ENCODE measurements at regions of chr1 and their contacts with region 1.

Region 1: DNA sequence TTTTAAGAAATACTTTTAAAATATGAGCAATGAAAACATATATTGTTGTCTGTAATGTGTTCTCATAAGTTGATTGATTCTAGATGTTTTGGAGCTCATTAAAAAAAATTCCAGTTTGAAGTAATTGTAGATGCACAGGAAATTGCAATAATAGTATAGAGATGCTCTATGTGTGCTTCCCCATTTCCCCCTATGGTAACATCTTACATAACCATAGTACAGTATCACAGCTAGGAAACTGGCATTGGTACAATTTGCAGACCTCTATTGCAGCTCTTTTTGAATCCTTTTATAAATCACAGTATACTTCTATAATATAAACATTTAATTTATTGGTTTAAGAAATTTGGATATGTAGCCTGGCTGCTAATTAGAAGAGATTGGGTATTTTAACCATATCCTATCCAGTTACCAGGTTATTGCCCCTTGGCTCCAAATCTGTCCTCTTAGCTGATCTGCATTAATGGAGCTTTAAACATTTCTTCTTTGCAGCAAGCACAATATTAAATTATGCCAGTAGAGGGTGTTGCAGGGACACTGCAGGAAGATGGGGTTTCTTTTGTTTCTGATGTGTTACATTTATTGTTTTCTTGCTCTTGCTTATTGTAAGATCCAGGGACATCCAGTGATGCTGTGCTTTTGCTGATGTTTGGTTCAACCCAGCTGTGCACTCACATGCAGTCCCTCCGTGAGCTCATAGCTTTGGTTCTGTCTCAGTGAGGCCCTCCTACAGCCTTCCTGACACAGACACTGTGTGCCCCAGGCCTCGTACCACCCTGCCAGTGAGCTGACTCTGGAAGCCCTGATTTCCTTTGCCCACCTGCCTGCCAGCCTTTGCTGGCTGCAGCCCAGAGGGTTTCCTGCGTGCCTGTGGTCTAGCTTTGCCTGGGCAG is 103.3 kb downstream of the RABGAP1L start:
- DNase-seq: peak in 1 of 2 donors; percentile 78
- H3K4me3 ChIP-seq: no peak overlapping the region
- H3K27ac ChIP-seq: no peak overlapping the region
- H3K4me1 ChIP-seq: peaks cover 0 to 4% (median 0%) of the 10 kb centered on the region in 4 donors
- H3K27me3 ChIP-seq: no peaks in the 10 kb centered on the region
- CTCF ChIP-seq: peak in 5 of 7 experiments; percentile 43 to 52 (median 50)
- EP300 ChIP-seq: no peak
- POLR2A ChIP-seq: no peak

Region 2: GRCh38 chr1:174074757-174075156 is 187.8 kb before region 1 on chr1:
- intact Hi-C with region 1: no loop called
- DNase-seq: peak in 1 of 2 donors; percentile 46
- H3K4me3 ChIP-seq: no peak overlapping the region
- H3K27ac ChIP-seq: no peak overlapping the region
- H3K4me1 ChIP-seq: no peaks in the 10 kb centered on the region
- H3K27me3 ChIP-seq: no peaks in the 10 kb centered on the region
- CTCF ChIP-seq: peak in 2 of 7 experiments; percentile 7 to 33
- EP300 ChIP-seq: no peak
- POLR2A ChIP-seq: no peak

Region 3: DNA sequence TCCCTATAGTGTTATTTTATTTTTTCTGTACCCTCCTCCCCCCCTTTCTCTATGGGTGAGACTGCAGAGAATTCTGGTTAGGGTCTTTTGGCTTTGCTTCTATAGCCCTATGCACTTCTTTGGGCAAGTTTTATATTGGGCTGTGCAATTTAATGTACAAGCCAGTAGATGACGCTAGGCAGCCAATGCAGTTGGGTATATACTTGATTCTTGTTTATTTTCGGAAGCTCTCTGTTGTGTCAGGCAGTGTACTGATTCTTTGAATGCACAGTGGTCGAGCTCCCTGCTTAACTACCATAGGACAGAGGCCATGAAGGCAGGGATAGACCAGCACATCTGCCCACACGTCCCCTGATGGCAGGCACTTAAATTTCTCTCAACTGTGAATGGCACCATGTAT is 151.0 kb after region 1 on chr1:
- intact Hi-C with region 1: no loop called
- DNase-seq: no peak
- H3K4me3 ChIP-seq: no peak overlapping the region
- H3K27ac ChIP-seq: no peak overlapping the region
- H3K4me1 ChIP-seq: no peaks in the 10 kb centered on the region
- H3K27me3 ChIP-seq: no peaks in the 10 kb centered on the region
- CTCF ChIP-seq: no peak
- EP300 ChIP-seq: no peak
- POLR2A ChIP-seq: no peak

Region 4: GRCh38 chr1:174726167-174726879 is 463.7 kb after region 1 on chr1:
- intact Hi-C with region 1: loop called (anchors 10 kb)
- DNase-seq: peak in 1 of 2 donors; percentile 47
- H3K4me3 ChIP-seq: no peak overlapping the region
- H3K27ac ChIP-seq: no peak overlapping the region
- H3K4me1 ChIP-seq: no peaks in the 10 kb centered on the region
- H3K27me3 ChIP-seq: no peaks in the 10 kb centered on the region
- CTCF ChIP-seq: peak in 4 of 7 experiments; percentile 24 to 34 (median 32)
- EP300 ChIP-seq: no peak
- POLR2A ChIP-seq: no peak

Region 5: GRCh38 chr1:174743654-174744561 is 481.3 kb after region 1 on chr1:
- intact Hi-C with region 1: loop called (anchors 5 kb)
- DNase-seq: peak in 1 of 2 donors; percentile 73
- H3K4me3 ChIP-seq: no peak overlapping the region
- H3K27ac ChIP-seq: no peak overlapping the region
- H3K4me1 ChIP-seq: peaks cover 0 to 6% (median 0%) of the 10 kb centered on the region in 4 donors
- H3K27me3 ChIP-seq: no peaks in the 10 kb centered on the region
- CTCF ChIP-seq: peak in 5 of 7 experiments; percentile 38 to 69 (median 59)
- EP300 ChIP-seq: no peak
- POLR2A ChIP-seq: no peak